MCF 10A (cell line): ENCODE measurements at regions of chr20 and their contacts with region 1.

Region 1: GRCh38 chr20:34312544-34313217 is 9.5 kb upstream of the AHCY start:
- DNase-seq: peak; percentile 91
- H3K4me3 Mint-ChIP-seq: peak overlapping the region; percentile 35
- H3K27ac Mint-ChIP-seq: no peak overlapping the region
- H3K4me1 Mint-ChIP-seq: peaks cover 37% of the 10 kb centered on the region
- H3K27me3 Mint-ChIP-seq: no peaks in the 10 kb centered on the region
- CTCF ChIP-seq: peak; percentile 100

Region 2: DNA sequence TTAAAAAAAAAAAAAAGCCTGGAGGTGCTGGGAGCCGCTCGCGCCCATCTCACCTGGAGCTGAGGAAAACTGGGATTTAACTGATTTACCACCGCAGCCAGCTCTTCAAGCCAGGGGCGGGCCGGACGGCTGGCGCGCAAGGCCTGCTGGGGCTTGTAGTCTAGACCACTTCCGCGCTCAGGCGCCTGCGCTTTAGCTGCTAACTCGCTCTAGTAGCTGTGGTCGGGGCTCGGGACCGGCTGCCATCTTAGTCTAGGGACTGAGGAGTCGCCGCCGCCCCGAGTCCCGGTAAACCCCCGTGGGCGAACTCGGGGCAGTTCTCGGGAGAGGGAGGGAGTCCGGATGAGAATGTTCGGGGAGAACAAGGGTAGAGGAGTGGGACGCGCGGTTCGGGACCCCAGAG is 50.4 kb after region 1 on chr20 and contains the start of gene ITCH:
- CTCF ChIA-PET with region 1: interaction called, 58 read pairs
- POLR2A ChIA-PET with region 1: interaction called, 64 read pairs
- intact Hi-C with region 1: loop called (anchors 5 kb)
- DNase-seq: peak; percentile 96
- H3K4me3 Mint-ChIP-seq: peak within 1 kb of the TSS; percentile 95
- H3K27ac Mint-ChIP-seq: peak within 1 kb of the TSS; percentile 100
- H3K4me1 Mint-ChIP-seq: peaks cover 13% of the 10 kb centered on the region
- H3K27me3 Mint-ChIP-seq: no peaks in the 10 kb centered on the region
- CTCF ChIP-seq: no peak
- total RNA-seq, gene ITCH: 57.3 and 68.3 TPM in 2 replicates

Region 3: GRCh38 chr20:34403908-34404307 is 91.2 kb after region 1 on chr20:
- CTCF ChIA-PET with region 1: interaction called, 45 read pairs
- POLR2A ChIA-PET with region 1: interaction called, 7 read pairs
- intact Hi-C with region 1: no loop called
- DNase-seq: no peak
- H3K4me3 Mint-ChIP-seq: no peak overlapping the region
- H3K27ac Mint-ChIP-seq: peak overlapping the region; percentile 0
- H3K4me1 Mint-ChIP-seq: peaks cover 26% of the 10 kb centered on the region
- H3K27me3 Mint-ChIP-seq: no peaks in the 10 kb centered on the region
- CTCF ChIP-seq: no peak

Region 4: GRCh38 chr20:34452281-34452982 is 139.8 kb after region 1 on chr20:
- CTCF ChIA-PET with region 1: interaction called, 44 read pairs
- POLR2A ChIA-PET with region 1: interaction called, 10 read pairs
- intact Hi-C with region 1: no loop called
- DNase-seq: no peak
- H3K4me3 Mint-ChIP-seq: no peak overlapping the region
- H3K27ac Mint-ChIP-seq: no peak overlapping the region
- H3K4me1 Mint-ChIP-seq: no peaks in the 10 kb centered on the region
- H3K27me3 Mint-ChIP-seq: no peaks in the 10 kb centered on the region
- CTCF ChIP-seq: no peak

Region 5: DNA sequence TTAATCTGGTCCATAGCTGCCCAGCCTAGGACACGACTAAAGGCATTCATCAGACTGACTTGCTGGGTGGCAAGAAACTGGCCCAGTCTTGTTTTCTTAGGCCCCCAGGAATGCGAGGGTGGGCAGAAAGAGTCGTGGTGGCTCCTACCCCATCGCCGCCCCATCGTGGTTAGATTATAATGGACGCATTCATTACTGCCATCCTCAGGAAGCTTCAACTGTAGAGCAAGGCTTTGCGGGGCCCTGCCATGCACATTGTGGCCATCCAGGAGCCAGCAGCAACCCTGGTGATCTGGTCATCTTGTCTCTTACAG is 219.7 kb after region 1 on chr20:
- CTCF ChIA-PET with region 1: interaction called, 10 read pairs
- POLR2A ChIA-PET with region 1: no interaction called
- intact Hi-C with region 1: no loop called
- DNase-seq: no peak
- H3K4me3 Mint-ChIP-seq: no peak overlapping the region
- H3K27ac Mint-ChIP-seq: no peak overlapping the region
- H3K4me1 Mint-ChIP-seq: peaks cover 7% of the 10 kb centered on the region
- H3K27me3 Mint-ChIP-seq: no peaks in the 10 kb centered on the region
- CTCF ChIP-seq: no peak

Region 6: GRCh38 chr20:34768096-34768495 is 455.4 kb after region 1 on chr20:
- CTCF ChIA-PET with region 1: interaction called, 12 read pairs
- POLR2A ChIA-PET with region 1: no interaction called
- intact Hi-C with region 1: loop called (anchors 2 kb)
- DNase-seq: no peak
- H3K4me3 Mint-ChIP-seq: no peak overlapping the region
- H3K27ac Mint-ChIP-seq: no peak overlapping the region
- H3K4me1 Mint-ChIP-seq: peaks cover 6% of the 10 kb centered on the region
- H3K27me3 Mint-ChIP-seq: no peaks in the 10 kb centered on the region
- CTCF ChIP-seq: no peak

Region 7: GRCh38 chr20:34797012-34797995 is 484.6 kb after region 1 on chr20:
- CTCF ChIA-PET with region 1: no interaction called
- POLR2A ChIA-PET with region 1: no interaction called
- intact Hi-C with region 1: no loop called
- DNase-seq: no peak
- H3K4me3 Mint-ChIP-seq: no peak overlapping the region
- H3K27ac Mint-ChIP-seq: no peak overlapping the region
- H3K4me1 Mint-ChIP-seq: peaks cover 6% of the 10 kb centered on the region
- H3K27me3 Mint-ChIP-seq: no peaks in the 10 kb centered on the region
- CTCF ChIP-seq: no peak